Left cardiac atrium (tissue), 4 donors: ENCODE measurements at regions of chr19 and their contacts with region 1.

Region 1: DNA sequence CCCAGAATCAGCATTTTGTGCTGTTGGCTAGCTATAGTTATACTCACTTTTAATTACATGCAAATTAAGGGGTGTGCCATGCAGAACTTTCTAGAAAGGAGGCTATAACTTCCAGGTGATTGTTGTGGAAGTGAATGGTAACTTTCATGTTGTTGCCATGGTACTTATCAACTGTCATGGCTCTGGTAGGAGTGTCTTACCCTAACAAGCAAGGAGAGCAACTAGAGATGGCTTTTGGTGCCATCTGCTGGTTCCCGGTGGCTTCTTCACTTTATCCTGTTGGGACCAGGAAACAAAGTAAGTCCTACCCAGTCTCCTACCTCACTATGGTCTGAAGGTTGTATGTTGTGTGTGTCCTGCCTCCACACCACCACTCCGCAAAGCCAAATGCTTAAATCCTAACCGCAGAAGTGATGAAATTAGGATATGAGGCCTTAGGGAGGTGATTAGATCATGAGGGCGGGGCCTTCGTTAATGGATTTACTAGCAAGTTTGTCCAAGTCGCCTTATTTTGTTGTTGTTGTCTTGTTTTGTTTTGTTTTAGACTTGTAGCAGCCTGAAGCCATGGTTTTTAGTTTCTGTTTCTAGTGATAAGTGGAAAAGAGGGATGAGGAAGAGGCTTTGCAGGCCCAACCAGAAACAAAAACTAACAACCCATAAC is 22.6 kb downstream of the FBXL12 start:
- DNase-seq: peak; percentile 82
- ATAC-seq: peak; percentile 2 to 9

Region 2: DNA sequence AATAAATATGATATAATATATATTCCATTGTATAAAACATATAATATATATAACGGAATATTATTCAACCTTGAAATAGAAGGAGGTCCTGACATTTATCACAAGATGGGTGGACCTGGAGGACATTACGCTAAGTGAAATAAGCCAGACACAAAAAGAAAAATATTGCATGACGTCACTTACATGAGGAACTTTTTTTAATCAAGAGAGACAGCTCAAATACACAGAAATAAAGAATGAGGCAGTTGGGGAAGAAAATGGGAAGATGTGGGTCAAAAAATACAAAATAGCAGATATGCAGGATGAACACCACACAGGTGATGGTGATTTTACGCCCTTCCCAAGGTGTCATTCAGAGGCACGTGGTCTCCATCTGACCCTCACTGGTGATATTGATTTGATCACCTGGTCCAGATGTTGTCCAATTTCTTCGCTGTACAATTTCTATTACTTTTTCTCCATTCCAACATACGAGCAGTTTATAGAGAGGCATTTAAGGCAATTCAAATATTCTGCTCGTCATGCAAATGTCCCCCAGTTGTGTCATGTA is 656.6 kb before region 1 on chr19:
- intact Hi-C with region 1: loop called in 1 of 2 experiments (anchors 5 kb)
- DNase-seq: no peak
- ATAC-seq: no peak

Region 3: DNA sequence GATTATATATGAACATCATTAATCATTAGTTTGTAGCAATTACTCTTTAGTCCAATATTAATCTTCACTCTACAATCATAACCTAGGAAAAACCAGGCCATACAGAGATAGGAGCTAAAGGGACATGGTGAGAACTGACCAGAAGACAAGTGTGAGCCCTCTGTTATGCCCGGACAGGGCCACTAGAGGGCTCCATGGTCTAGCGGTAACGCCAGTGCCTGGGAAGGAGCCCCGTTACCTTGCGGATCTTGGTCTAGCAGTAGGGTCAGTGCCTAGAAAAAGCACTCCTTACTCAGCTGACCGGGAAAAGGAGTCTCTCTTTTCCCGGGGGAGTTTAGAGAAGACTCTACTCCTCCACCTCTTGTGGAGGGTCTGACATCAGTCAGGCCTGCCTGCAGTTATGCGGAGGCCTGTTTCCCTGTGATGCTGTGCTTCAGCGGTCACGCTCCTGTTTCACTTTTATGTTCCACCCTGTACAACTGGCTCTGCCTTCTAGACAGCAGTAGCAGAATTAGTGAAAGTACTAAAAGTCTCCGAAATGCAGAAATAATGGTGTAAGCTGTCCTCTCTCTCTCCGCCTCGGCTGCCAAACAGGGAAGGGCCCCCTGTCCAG is 590.6 kb before region 1 on chr19:
- intact Hi-C with region 1: loop called in 1 of 2 experiments (anchors 5 kb)
- DNase-seq: peak; percentile 77
- ATAC-seq: peak in 1 of 2 donors; percentile 81

Region 4: DNA sequence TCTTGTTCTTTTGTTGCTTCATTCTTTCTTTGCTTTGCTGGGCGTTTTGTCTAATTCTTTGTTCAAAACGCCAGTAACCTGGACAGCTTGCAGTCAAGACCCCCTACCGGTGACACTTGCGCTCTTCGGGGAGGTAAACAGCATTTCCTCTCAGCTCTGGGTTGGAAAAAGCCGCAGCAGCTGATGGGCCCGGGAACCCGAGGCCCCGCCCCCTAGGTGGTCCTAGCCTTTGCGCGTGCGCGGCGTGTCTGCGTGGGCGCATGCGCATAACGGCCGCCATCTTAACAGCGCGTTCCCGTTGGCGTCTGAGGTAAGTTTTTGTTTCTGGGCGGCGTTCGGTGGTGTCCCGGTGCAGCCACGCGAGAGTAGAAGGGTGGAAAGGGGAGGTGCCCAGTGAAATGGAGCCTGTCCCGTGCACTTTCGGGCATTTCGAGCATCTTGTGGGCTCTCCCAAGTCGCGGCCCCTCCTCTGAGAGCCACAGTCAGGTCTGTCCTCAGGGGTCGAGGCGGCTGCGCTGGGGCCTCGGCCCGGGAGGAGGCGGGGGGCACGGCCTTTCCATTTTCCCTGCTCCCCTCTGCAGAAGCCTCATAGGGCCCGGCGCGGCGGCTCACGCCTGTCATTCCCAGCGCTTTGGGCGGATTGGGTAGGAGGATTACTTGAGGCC is 472.2 kb before region 1 on chr19 and contains the start of gene ZNF559:
- intact Hi-C with region 1: loop called in 1 of 2 experiments (anchors 10 kb)
- DNase-seq: peak; percentile 94
- ATAC-seq: peak; percentile 98
- total RNA-seq, gene ZNF559: 13.6 to 14.7 TPM

Region 5: GRCh38 chr19:9621156-9622037 is 174.8 kb before region 1 on chr19 and contains the start of gene ZNF561:
- intact Hi-C with region 1: loop called (anchors 2 to 5 kb)
- DNase-seq: peak; percentile 91
- ATAC-seq: peak; percentile 96 to 97
- total RNA-seq, gene ZNF561: 18.9 to 20.1 TPM

Region 6: GRCh38 chr19:9627856-9628255 is 168.4 kb before region 1 on chr19:
- intact Hi-C with region 1: loop called (anchors 2 to 5 kb)
- DNase-seq: no peak
- ATAC-seq: no peak

Region 7: DNA sequence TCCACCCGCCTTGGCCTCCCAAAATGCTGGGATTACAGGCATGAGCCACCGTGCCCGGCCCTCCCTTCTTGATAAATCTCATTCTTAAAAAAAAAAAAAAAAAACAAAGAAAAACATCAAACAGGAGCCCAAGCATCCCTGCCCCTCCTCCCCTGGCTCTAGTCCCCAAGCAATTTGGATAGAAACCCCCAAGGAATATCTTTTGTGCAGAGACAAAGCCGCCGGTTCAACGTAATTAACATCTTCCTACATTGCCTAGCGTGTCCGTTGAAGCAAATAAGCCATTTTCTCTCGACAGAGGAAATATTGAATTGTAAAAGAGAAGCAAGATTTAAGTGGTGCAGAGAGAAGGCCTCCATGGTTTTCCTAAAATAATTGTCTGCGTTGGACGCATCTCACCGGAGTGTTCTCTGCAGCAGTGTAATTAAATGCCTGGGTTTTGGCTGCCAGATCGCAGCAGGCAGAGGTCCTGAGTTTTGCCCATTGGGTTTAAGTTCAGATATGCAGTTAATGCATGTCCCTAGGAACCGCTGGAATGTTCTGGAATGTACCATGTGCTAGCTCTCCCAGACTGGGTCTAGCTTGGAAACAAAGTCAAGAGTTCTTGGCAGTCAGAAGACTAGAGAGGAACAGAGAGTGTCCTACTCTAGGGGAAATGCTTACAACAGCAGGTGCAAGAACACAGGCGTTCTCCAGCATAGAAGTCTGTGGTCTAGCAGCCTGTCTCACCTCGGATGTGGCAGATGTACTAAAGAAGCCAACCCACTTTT is 69.7 kb after region 1 on chr19:
- intact Hi-C with region 1: no loop called
- DNase-seq: no peak
- ATAC-seq: no peak

Region 8: GRCh38 chr19:10184636-10185035 is 388.4 kb after region 1 on chr19:
- intact Hi-C with region 1: no loop called
- DNase-seq: no peak
- ATAC-seq: no peak